Heart right ventricle (tissue), 16 donors: ENCODE measurements at regions of chr11 and their contacts with region 1.

Region 1: GRCh38 chr11:2142762-2143202 is 3.6 kb upstream of the IGF2 start:
- DNase-seq: no peak
- ATAC-seq: no peak
- H3K4me3 ChIP-seq: no peak overlapping the region
- H3K27ac ChIP-seq: no peak overlapping the region
- H3K4me1 ChIP-seq: peaks cover 4 to 25% (median 13%) of the 10 kb centered on the region in 9 donors
- H3K27me3 ChIP-seq: peaks cover 34 to 96% (median 90%) of the 10 kb centered on the region in 7 donors
- CTCF ChIP-seq: no peak

Region 2: DNA sequence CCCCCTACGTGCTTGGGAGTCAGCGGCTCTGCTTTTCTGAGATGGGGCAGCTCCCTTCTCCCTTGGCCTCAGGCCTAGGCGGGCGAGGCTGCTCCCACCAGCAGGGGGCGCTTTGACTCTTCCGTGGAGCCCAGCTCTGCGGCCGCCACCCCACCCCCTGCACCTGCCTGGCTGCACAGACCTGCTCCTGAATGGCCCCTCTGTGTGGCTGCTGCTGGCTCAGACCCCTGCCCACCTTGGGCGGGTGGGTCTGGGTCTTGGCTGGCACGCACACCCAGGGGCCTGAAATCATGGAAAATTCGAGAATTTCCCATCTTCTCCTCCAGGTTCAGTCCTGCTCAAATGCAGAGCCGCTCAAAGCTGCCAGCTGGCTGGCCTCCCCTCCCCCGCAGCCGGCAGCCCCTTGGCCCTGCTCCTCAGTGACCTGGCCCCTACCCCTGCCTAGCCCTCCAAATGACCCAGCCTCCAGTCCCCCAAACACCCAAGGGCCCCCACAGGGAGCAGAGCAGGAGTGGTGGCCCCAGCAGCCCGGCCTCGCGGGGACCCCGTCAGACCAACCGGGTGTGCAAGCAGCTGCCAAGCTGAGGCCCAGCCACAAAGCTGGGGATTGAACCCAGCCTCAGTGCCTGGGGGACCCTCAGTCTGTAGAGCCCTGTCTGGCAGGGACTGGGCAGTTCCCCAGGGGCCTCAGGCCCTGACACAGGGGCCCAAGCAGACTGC is 260.1 kb before region 1 on chr11:
- intact Hi-C with region 1: loop called in 2 of 10 experiments (anchors 5 to 10 kb)
- DNase-seq: peak; percentile 86 to 91
- ATAC-seq: peak; percentile 72 to 88 (median 84)
- H3K4me3 ChIP-seq: no peak overlapping the region
- H3K27ac ChIP-seq: peak overlapping the region; percentile 88 to 100 (median 96)
- H3K4me1 ChIP-seq: peaks cover 32 to 57% (median 46%) of the 10 kb centered on the region in 9 donors
- H3K27me3 ChIP-seq: no peaks in the 10 kb centered on the region
- CTCF ChIP-seq: peak; percentile 87 to 96 (median 94)

Region 3: GRCh38 chr11:1988667-1989317 is 154.0 kb before region 1 on chr11:
- intact Hi-C with region 1: no loop called
- DNase-seq: peak in 1 of 2 donors; percentile 21
- ATAC-seq: peak in 4 of 8 donors; percentile 13 to 50 (median 37)
- H3K4me3 ChIP-seq: no peak overlapping the region
- H3K27ac ChIP-seq: no peak overlapping the region
- H3K4me1 ChIP-seq: no peaks in the 10 kb centered on the region
- H3K27me3 ChIP-seq: no peaks in the 10 kb centered on the region
- CTCF ChIP-seq: no peak

Region 4: GRCh38 chr11:2196970-2197770 is 54.4 kb after region 1 on chr11:
- intact Hi-C with region 1: no loop called
- DNase-seq: peak; percentile 66 to 76
- ATAC-seq: peak; percentile 59 to 86 (median 80)
- H3K4me3 ChIP-seq: no peak overlapping the region
- H3K27ac ChIP-seq: no peak overlapping the region
- H3K4me1 ChIP-seq: peaks cover 0 to 11% (median 0%) of the 10 kb centered on the region in 9 donors
- H3K27me3 ChIP-seq: peaks cover 0 to 12% (median 7%) of the 10 kb centered on the region in 7 donors
- CTCF ChIP-seq: peak; percentile 53 to 85 (median 81)